ENCODE measurements at regions of chr3 and their contacts with region 1.

Region 1: DNA sequence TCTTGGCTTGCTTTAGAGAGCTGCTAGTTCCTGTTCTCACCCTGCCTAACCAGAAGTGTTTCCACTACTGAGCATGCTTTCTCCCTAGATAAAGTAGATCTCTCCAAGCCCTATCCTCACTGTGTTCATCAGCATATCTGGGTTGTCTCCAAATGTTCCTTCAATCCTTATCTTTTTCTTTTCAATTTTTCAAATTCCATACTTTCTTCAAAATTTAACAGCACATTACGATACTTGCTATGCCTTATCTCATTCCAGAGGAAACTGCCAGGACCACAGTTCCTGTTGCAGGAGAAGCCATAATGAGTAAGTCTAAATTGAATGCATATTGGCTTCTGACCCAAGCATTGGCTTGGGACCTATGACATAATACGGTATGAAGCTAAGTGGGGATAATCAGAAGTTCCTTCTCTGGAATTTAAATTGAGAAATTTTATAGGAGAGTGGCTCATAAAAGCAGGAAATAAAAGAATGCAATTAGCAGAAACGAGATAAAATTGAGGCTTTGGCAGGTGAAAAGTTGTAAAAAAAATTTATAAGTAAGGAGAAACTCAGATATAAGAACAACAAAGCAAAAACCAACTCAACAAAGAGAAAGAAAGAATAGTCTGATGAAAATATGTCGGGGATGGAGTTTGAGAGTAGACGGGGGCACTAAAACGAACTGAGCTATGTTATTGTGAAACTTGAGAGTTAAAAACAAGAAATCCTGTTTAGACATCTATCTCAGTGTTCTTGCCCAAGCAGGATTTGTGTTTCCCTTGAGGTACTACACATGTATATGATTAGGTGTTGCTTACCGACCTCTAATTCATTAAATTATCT is 631.7 kb upstream of the CCDC54 start:
- DNase-seq: peak; percentile 96
- H3K4me3 ChIP-seq: peak overlapping the region in 1 of 3 experiments; percentile 52
- H3K27ac ChIP-seq: peak overlapping the region; percentile 92
- H3K4me1 ChIP-seq: peaks cover 36% of the 10 kb centered on the region
- H3K27me3 ChIP-seq: no peaks in the 10 kb centered on the region
- CTCF ChIP-seq: no peak
- POLR2A ChIP-seq: no peak

Region 2: DNA sequence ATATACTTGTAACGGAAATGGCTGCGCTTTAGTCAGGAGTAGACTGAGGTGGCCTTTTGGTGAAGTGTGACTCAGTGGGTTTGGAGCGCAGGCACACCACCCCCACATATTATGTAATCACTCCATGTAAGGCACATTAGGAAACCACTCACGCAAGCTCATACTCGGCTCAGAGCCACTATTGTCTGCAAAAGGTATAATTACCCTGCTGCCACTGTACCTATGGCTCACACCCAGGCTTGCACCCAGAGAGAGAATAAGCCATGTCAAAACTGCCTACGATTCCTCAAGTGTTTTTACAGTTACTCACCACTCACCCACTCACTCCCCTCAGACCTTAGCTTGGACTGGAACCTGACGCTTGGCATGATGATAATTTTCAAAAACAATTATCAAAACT is 19.8 kb after region 1 on chr3:
- CTCF ChIA-PET with region 1: interaction called, 3 read pairs
- POLR2A ChIA-PET with region 1: no interaction called
- dilution Hi-C with region 1: no loop called
- intact Hi-C with region 1: loop called (anchors 1 kb)
- DNase-seq: peak; percentile 10
- H3K4me3 ChIP-seq: no peak overlapping the region
- H3K27ac ChIP-seq: no peak overlapping the region
- H3K4me1 ChIP-seq: peaks cover 2% of the 10 kb centered on the region
- H3K27me3 ChIP-seq: no peaks in the 10 kb centered on the region
- CTCF ChIP-seq: no peak
- POLR2A ChIP-seq: no peak

Measured in endothelial cell of umbilical vein (primary cell).